ENCODE measurements at regions of chr11 and their contacts with region 1.

Region 1: GRCh38 chr11:35330931-35331330 is 88.4 kb downstream of the SLC1A2 start:
- DNase-seq: peak; percentile 46
- H3K4me3 Mint-ChIP-seq: peak overlapping the region; percentile 10
- H3K27ac Mint-ChIP-seq: peak overlapping the region; percentile 5
- H3K4me1 Mint-ChIP-seq: peaks cover 41% of the 10 kb centered on the region
- H3K27me3 Mint-ChIP-seq: peaks cover 2% of the 10 kb centered on the region

Region 2: DNA sequence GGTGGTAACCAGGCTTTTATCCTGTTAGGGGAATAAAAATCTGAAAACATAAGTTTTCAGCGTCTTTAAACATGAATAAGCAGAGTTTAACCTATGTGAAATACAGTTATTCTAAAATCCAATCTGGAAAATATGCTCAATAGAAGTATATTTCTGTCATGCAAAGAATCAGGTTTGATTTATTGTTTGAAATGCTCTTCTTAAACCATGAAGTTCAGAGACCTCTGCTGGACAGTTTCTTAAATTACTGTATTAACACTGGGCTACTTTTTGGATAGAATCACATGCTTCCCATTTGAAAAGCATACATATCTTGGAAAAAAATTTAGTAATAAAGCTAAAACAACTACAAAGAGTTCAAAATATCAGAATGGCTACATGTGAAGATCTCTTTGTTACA is 440.1 kb before region 1 on chr11:
- intact Hi-C with region 1: no loop called
- DNase-seq: no peak
- H3K4me3 Mint-ChIP-seq: no peak overlapping the region
- H3K27ac Mint-ChIP-seq: no peak overlapping the region
- H3K4me1 Mint-ChIP-seq: no peaks in the 10 kb centered on the region
- H3K27me3 Mint-ChIP-seq: no peaks in the 10 kb centered on the region

Region 3: GRCh38 chr11:35316161-35316560 is 14.8 kb before region 1 on chr11:
- intact Hi-C with region 1: loop called (anchors 2 kb)
- DNase-seq: no peak
- H3K4me3 Mint-ChIP-seq: no peak overlapping the region
- H3K27ac Mint-ChIP-seq: no peak overlapping the region
- H3K4me1 Mint-ChIP-seq: peaks cover 27% of the 10 kb centered on the region
- H3K27me3 Mint-ChIP-seq: peaks cover 2% of the 10 kb centered on the region

Measured in activated T-helper 1 cell treated with anti-CD3 and anti-CD28 coated beads, Interleukin-12 subunit alpha, Interleukin-12 subunit beta, Interleukin-2, Interleukin-4 antibody, amounts not matched to agents 30 ng/mL and 10 ng/mL and 1 ng/mL, durations not matched to agents 14 hours and 24 hours and 36 hours (primary cell).